ENCODE measurements at regions of chr3 and their contacts with region 1.

Region 1: GRCh38 chr3:71064288-71064955 is 519.1 kb downstream of the FOXP1 start:
- DNase-seq: peak; percentile 48 to 86 (median 66)
- ATAC-seq: peak; percentile 43
- H3K4me3 ChIP-seq: peak overlapping the region; percentile 65 to 91
- H3K4me3 Mint-ChIP-seq: no peak overlapping the region
- H3K27ac ChIP-seq: peak overlapping the region; percentile 80 to 85
- H3K27ac Mint-ChIP-seq: no peak overlapping the region
- H3K4me1 ChIP-seq: peaks cover 79% of the 10 kb centered on the region
- H3K4me1 Mint-ChIP-seq: peaks cover 67% of the 10 kb centered on the region
- H3K27me3 ChIP-seq: no peaks in the 10 kb centered on the region
- H3K27me3 Mint-ChIP-seq: no peaks in the 10 kb centered on the region
- CTCF ChIP-seq: no peak

Region 2: DNA sequence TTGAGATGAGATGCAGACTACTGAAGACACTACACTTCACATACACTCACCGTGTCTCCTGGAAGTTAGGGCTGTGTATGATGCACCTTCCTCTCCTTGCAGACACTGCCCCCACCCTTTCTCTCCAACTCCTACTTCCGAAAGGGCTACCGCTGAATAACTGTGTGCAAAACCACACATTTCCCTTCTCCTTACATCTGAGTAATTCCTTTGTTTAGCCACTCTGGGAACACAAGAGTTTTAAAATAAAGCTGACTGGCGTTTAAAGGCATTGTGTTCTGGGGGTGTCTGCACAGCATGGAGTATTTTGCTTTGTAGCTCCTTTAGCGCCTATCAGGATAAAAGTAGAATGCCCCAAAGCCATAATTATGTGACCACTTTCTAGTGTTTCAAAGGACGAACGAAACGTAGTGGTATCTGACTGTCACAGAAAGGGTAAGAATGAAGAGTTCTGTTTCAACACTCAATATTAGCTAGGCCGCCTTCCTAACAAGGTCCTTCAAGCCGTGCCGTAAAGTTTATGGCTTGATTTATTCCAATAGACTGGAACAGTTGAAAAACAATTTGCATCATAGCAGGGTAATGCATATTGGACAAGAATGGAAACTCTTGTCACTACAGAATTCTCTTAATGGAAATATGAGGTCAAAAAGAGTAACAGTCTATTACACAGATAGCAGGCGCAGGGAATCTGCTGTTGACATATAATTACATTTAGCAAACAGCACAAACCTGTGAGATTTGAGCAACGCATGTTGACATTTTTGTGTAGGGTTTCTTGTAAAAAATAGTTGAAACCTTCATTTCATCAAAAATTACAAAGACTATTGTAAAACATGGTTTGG is 100.8 kb before region 1 on chr3:
- CTCF ChIA-PET with region 1: no interaction called
- POLR2A ChIA-PET with region 1: no interaction called
- intact Hi-C with region 1: no loop called
- DNase-seq: no peak
- ATAC-seq: no peak
- H3K4me3 ChIP-seq: no peak overlapping the region
- H3K4me3 Mint-ChIP-seq: no peak overlapping the region
- H3K27ac ChIP-seq: no peak overlapping the region
- H3K27ac Mint-ChIP-seq: peak overlapping the region; percentile 64
- H3K4me1 ChIP-seq: no peaks in the 10 kb centered on the region
- H3K4me1 Mint-ChIP-seq: peaks cover 2% of the 10 kb centered on the region
- H3K27me3 ChIP-seq: no peaks in the 10 kb centered on the region
- H3K27me3 Mint-ChIP-seq: no peaks in the 10 kb centered on the region
- CTCF ChIP-seq: no peak

Region 3: GRCh38 chr3:71026634-71027578 is 37.5 kb before region 1 on chr3:
- CTCF ChIA-PET with region 1: interaction called, 3 read pairs
- POLR2A ChIA-PET with region 1: no interaction called
- intact Hi-C with region 1: loop called (anchors 5 kb)
- DNase-seq: no peak
- ATAC-seq: no peak
- H3K4me3 ChIP-seq: no peak overlapping the region
- H3K4me3 Mint-ChIP-seq: no peak overlapping the region
- H3K27ac ChIP-seq: no peak overlapping the region
- H3K27ac Mint-ChIP-seq: peak overlapping the region; percentile 7
- H3K4me1 ChIP-seq: peaks cover 32% of the 10 kb centered on the region
- H3K4me1 Mint-ChIP-seq: peaks cover 86% of the 10 kb centered on the region
- H3K27me3 ChIP-seq: no peaks in the 10 kb centered on the region
- H3K27me3 Mint-ChIP-seq: no peaks in the 10 kb centered on the region
- CTCF ChIP-seq: no peak

Region 4: GRCh38 chr3:71050538-71051258 is 13.7 kb before region 1 on chr3:
- CTCF ChIA-PET with region 1: interaction called, 4 read pairs
- POLR2A ChIA-PET with region 1: interaction called, 7 read pairs
- intact Hi-C with region 1: loop called (anchors 1 kb)
- DNase-seq: peak in 6 of 9 experiments; percentile 14 to 85 (median 48)
- ATAC-seq: peak; percentile 93
- H3K4me3 ChIP-seq: no peak overlapping the region
- H3K4me3 Mint-ChIP-seq: peak overlapping the region; percentile 46
- H3K27ac ChIP-seq: peak overlapping the region; percentile 10 to 49
- H3K27ac Mint-ChIP-seq: peak overlapping the region; percentile 97
- H3K4me1 ChIP-seq: peaks cover 96% of the 10 kb centered on the region
- H3K4me1 Mint-ChIP-seq: peaks cover 100% of the 10 kb centered on the region
- H3K27me3 ChIP-seq: no peaks in the 10 kb centered on the region
- H3K27me3 Mint-ChIP-seq: no peaks in the 10 kb centered on the region
- CTCF ChIP-seq: no peak

Region 5: DNA sequence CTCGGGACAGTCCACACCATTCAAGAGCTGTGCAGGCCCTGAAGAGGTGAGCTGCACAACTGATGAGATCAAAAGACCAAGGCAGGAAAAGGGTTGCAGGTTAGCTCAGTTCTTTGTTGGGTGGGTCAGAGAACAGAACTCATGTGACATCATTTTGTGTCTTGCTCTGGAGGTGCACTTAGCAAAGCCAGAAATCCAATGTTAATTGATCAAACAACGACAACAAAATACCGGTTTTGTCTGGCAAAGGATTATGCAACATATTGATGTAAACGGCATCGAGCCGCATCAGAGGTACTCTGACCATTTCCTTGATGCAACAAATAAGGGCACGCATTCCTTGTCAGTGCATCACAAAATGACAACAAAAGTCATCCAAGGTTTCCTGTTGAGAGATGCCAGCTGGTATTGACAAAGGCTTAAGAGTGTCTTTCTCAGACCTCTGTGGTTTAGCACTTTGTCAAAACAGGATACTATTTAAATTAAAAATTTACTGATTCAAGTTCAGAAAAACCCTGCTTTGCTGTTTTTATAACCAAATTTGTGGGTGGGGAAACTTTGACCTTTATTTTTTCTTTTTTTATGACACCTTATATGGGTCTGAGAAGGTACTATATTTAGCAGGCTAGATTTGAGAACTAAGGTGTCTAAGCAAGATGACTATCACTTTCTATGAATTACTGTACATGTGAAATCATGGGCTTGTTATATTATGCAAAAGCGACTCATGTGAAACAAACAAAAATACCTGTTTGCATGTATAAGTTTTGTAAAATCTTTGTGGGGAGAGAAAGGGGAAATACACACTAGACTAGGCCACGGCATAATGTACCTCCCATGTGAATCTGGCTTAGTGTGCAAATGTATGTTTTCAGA is 23.0 kb after region 1 on chr3:
- CTCF ChIA-PET with region 1: interaction called, 6 read pairs
- POLR2A ChIA-PET with region 1: interaction called, 26 read pairs
- intact Hi-C with region 1: loop called in 1 of 2 experiments (anchors 2 kb)
- DNase-seq: peak in 7 of 9 experiments; percentile 19 to 79 (median 58)
- ATAC-seq: peak; percentile 74
- H3K4me3 ChIP-seq: no peak overlapping the region
- H3K4me3 Mint-ChIP-seq: peak overlapping the region; percentile 61
- H3K27ac ChIP-seq: peak overlapping the region; percentile 52 to 59
- H3K27ac Mint-ChIP-seq: peak overlapping the region; percentile 94
- H3K4me1 ChIP-seq: peaks cover 66% of the 10 kb centered on the region
- H3K4me1 Mint-ChIP-seq: peaks cover 83% of the 10 kb centered on the region
- H3K27me3 ChIP-seq: no peaks in the 10 kb centered on the region
- H3K27me3 Mint-ChIP-seq: no peaks in the 10 kb centered on the region
- CTCF ChIP-seq: no peak

Region 6: GRCh38 chr3:71226565-71227269 is 162.3 kb after region 1 on chr3:
- CTCF ChIA-PET with region 1: no interaction called
- POLR2A ChIA-PET with region 1: no interaction called
- intact Hi-C with region 1: loop called in 1 of 2 experiments (anchors 5 kb)
- DNase-seq: peak; percentile 57 to 88 (median 81)
- ATAC-seq: peak; percentile 75
- H3K4me3 ChIP-seq: peak overlapping the region; percentile 0 to 43
- H3K4me3 Mint-ChIP-seq: peak overlapping the region; percentile 73
- H3K27ac ChIP-seq: peak overlapping the region; percentile 18 to 63
- H3K27ac Mint-ChIP-seq: peak overlapping the region; percentile 97
- H3K4me1 ChIP-seq: peaks cover 56% of the 10 kb centered on the region
- H3K4me1 Mint-ChIP-seq: peaks cover 82% of the 10 kb centered on the region
- H3K27me3 ChIP-seq: no peaks in the 10 kb centered on the region
- H3K27me3 Mint-ChIP-seq: no peaks in the 10 kb centered on the region
- CTCF ChIP-seq: no peak

Region 7: GRCh38 chr3:72482589-72483321 is 1418.3 kb after region 1 on chr3:
- CTCF ChIA-PET with region 1: no interaction called
- POLR2A ChIA-PET with region 1: no interaction called
- intact Hi-C with region 1: no loop called
- DNase-seq: peak; percentile 24 to 79 (median 55)
- ATAC-seq: peak; percentile 71
- H3K4me3 ChIP-seq: peak overlapping the region; percentile 40 to 47
- H3K4me3 Mint-ChIP-seq: peak overlapping the region; percentile 84
- H3K27ac ChIP-seq: peak overlapping the region in 1 of 2 experiments; percentile 21
- H3K27ac Mint-ChIP-seq: peak overlapping the region; percentile 69
- H3K4me1 ChIP-seq: peaks cover 4% of the 10 kb centered on the region
- H3K4me1 Mint-ChIP-seq: peaks cover 14% of the 10 kb centered on the region
- H3K27me3 ChIP-seq: no peaks in the 10 kb centered on the region
- H3K27me3 Mint-ChIP-seq: no peaks in the 10 kb centered on the region
- CTCF ChIP-seq: no peak

Measured in CD8-positive, alpha-beta T cell (primary cell).